Activated T-helper 2 cell treated with anti-CD3 and anti-CD28 coated beads, Interferon-gamma antibody, Interleukin-2, Interleukin-4, amounts not matched to agents 10 μg/mL and 5 μg/mL and 100 μg/mL, durations not matched to agents 14 hours and 24 hours and 36 hours (primary cell): ENCODE measurements at regions of chr15 and their contacts with region 1.

Region 1: GRCh38 chr15:50908210-50909009 is at the start of gene AP4E1:
- DNase-seq: peak; percentile 93
- H3K4me3 Mint-ChIP-seq: peak within 1 kb of the TSS; percentile 97
- H3K27ac Mint-ChIP-seq: peak within 1 kb of the TSS; percentile 99
- H3K4me1 Mint-ChIP-seq: peaks cover 14% of the 10 kb centered on the region
- H3K27me3 Mint-ChIP-seq: no peaks in the 10 kb centered on the region
- total RNA-seq, gene AP4E1: 16.7 and 17.9 TPM in 2 replicates

Region 2: DNA sequence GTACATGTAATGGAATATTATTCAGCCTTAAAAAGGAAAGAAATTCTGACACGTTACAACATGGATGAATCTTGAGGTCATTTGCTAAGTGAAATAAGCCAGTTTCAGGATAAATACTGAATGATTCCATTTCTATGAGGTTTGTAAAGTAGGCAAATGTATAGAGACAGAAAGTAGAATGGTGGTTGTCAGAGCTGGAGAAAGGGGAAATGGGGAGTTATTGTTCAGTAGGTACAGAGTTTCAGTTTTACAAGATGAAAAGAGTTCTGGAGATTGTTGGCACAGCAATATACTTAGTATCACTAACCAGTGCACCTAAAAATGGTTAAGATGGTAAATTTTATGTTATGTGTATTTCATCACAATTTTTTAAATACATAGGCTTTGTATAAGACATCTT is 423.6 kb before region 1 on chr15:
- intact Hi-C with region 1: loop called (anchors 5 kb)
- DNase-seq: no peak
- H3K4me3 Mint-ChIP-seq: no peak overlapping the region
- H3K27ac Mint-ChIP-seq: peak overlapping the region; percentile 38
- H3K4me1 Mint-ChIP-seq: peaks cover 26% of the 10 kb centered on the region
- H3K27me3 Mint-ChIP-seq: no peaks in the 10 kb centered on the region

Region 3: DNA sequence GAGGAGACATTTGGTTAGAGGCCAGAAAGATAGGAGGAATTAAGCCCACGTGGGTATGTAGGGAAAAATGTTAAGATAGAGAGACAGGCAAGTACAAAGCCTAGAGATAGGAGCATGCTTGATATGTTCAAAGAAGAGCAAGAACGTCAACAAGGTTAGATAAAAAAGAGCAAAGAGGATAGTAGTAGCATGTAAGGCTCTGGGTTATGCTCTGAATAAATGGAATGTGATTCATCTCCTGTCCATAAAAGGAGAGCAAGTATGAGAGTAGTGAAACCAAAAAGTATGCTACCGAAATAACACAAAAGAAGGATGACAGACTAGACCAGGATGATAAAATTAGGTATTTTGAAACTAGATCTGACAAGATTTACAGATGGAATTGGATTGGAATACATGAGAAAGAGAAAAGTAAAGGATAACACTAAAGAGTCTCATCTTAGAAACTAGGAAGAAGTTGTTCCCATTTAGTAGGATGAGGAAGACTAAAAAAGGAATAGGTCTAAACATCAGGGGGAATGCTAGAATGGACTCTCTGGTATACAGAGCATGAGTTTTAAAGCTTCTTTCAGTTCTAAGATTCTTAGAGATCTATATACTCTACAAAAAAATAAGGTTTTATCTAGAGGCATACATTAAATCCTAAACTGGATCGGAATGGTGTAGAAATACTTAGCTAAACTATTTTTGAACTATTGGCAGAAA is 280.9 kb before region 1 on chr15:
- intact Hi-C with region 1: loop called (anchors 5 kb)
- DNase-seq: no peak
- H3K4me3 Mint-ChIP-seq: no peak overlapping the region
- H3K27ac Mint-ChIP-seq: peak overlapping the region; percentile 42
- H3K4me1 Mint-ChIP-seq: peaks cover 18% of the 10 kb centered on the region
- H3K27me3 Mint-ChIP-seq: no peaks in the 10 kb centered on the region

Region 4: GRCh38 chr15:50686468-50687301 is 221.7 kb before region 1 on chr15 and contains the start of gene TRPM7:
- intact Hi-C with region 1: loop called (anchors 1 kb)
- DNase-seq: peak; percentile 88
- H3K4me3 Mint-ChIP-seq: peak within 1 kb of the TSS; percentile 99
- H3K27ac Mint-ChIP-seq: peak within 1 kb of the TSS; percentile 98
- H3K4me1 Mint-ChIP-seq: peaks cover 37% of the 10 kb centered on the region
- H3K27me3 Mint-ChIP-seq: no peaks in the 10 kb centered on the region
- total RNA-seq, gene TRPM7: 42.3 and 43.1 TPM in 2 replicates

Region 5: DNA sequence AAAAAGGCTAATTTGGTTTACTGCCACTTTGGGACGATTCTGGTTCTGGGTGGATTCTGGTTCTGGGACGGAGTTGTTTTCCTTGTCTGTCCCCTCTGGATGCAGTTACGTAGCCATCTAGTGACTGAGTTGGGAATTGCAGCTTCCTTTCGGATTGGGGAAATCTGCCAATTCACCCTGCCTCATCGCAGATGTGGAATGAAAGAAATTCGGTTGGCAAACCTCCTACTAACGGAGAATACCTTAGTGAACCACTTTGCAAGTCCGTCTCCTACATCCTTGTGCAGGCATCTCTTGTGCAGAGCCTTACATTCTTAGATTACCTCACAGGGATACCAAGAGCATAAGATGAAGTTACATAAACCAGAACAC is 31.4 kb before region 1 on chr15:
- intact Hi-C with region 1: loop called (anchors 1 kb)
- DNase-seq: peak; percentile 56
- H3K4me3 Mint-ChIP-seq: peak overlapping the region; percentile 54
- H3K27ac Mint-ChIP-seq: peak overlapping the region; percentile 64
- H3K4me1 Mint-ChIP-seq: peaks cover 53% of the 10 kb centered on the region
- H3K27me3 Mint-ChIP-seq: peaks cover 10% of the 10 kb centered on the region

Region 6: DNA sequence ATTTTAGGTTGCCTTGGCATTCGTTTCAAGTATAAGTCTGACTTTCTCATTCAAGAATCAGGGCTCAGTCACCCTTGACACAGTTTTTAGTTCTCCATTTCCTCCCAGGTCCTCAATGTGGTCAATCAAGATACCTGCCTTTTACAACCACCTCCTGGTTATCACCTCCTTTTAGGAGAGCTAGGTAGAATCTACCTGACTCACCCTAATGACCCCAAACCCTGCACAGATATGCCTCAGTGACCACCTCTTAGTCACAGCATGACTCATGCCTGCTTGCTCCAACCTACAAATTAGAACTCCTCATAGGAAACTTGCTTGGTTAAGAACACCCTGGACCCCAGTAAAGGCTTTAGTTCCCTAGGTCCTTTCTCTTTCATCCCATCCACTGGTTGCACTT is 691.7 kb after region 1 on chr15:
- intact Hi-C with region 1: no loop called
- DNase-seq: no peak
- H3K4me3 Mint-ChIP-seq: no peak overlapping the region
- H3K27ac Mint-ChIP-seq: no peak overlapping the region
- H3K4me1 Mint-ChIP-seq: no peaks in the 10 kb centered on the region
- H3K27me3 Mint-ChIP-seq: peaks cover 2% of the 10 kb centered on the region